ENCODE measurements at regions of chr4 and their contacts with region 1.

Region 1: GRCh38 chr4:153573881-153574802 is 108.0 kb downstream of the TMEM131L start:
- DNase-seq: no peak
- ATAC-seq: peak; percentile 60
- H3K4me3 ChIP-seq: no peak overlapping the region
- H3K27ac ChIP-seq: peak overlapping the region; percentile 48
- H3K4me1 ChIP-seq: peaks cover 50% of the 10 kb centered on the region
- H3K27me3 ChIP-seq: no peaks in the 10 kb centered on the region
- CTCF ChIP-seq: peak; percentile 41 to 65 (median 53)
- EP300 ChIP-seq: no peak
- POLR2A ChIP-seq: no peak
- RAD21 ChIP-seq: peak; percentile 81

Region 2: GRCh38 chr4:153426207-153426885 is 147.8 kb before region 1 on chr4:
- CTCF ChIA-PET with region 1: interaction called, 10 read pairs
- POLR2A ChIA-PET with region 1: no interaction called
- RAD21 ChIA-PET with region 1: interaction called, 7 read pairs
- SMC1A ChIA-PET with region 1: interaction called, 48 read pairs
- in situ Hi-C with region 1: no loop called
- intact Hi-C with region 1: no loop called
- DNase-seq: no peak
- ATAC-seq: peak; percentile 58
- H3K4me3 ChIP-seq: no peak overlapping the region
- H3K27ac ChIP-seq: 0 out of 2 replicates have a peak overlapping the region, but pooled peaks have one; percentile 4
- H3K4me1 ChIP-seq: peaks cover 20% of the 10 kb centered on the region
- H3K27me3 ChIP-seq: no peaks in the 10 kb centered on the region
- CTCF ChIP-seq: no peak
- EP300 ChIP-seq: no peak
- POLR2A ChIP-seq: no peak
- RAD21 ChIP-seq: no peak

Region 3: GRCh38 chr4:153438916-153439756 is 135.0 kb before region 1 on chr4:
- CTCF ChIA-PET with region 1: interaction called, 33 read pairs
- POLR2A ChIA-PET with region 1: interaction called, 4 read pairs
- RAD21 ChIA-PET with region 1: interaction called, 35 read pairs
- SMC1A ChIA-PET with region 1: interaction called, 48 read pairs
- in situ Hi-C with region 1: loop called (anchors 5 kb)
- intact Hi-C with region 1: no loop called
- DNase-seq: peak; percentile 79
- ATAC-seq: peak; percentile 76
- H3K4me3 ChIP-seq: peak overlapping the region; percentile 65
- H3K27ac ChIP-seq: peak overlapping the region; percentile 80
- H3K4me1 ChIP-seq: peaks cover 38% of the 10 kb centered on the region
- H3K27me3 ChIP-seq: no peaks in the 10 kb centered on the region
- CTCF ChIP-seq: 0 out of 6 replicates have a peak, but pooled peaks of 1 of the 3 experiments have one; percentile 4
- EP300 ChIP-seq: no peak
- POLR2A ChIP-seq: no peak
- RAD21 ChIP-seq: no peak

Region 4: GRCh38 chr4:153521999-153522801 is 51.9 kb before region 1 on chr4:
- CTCF ChIA-PET with region 1: interaction called, 9 read pairs
- POLR2A ChIA-PET with region 1: interaction called, 8 read pairs
- RAD21 ChIA-PET with region 1: interaction called, 9 read pairs
- SMC1A ChIA-PET with region 1: interaction called, 26 read pairs
- in situ Hi-C with region 1: no loop called
- intact Hi-C with region 1: loop called (anchors 2 kb)
- DNase-seq: peak; percentile 71
- ATAC-seq: peak; percentile 54
- H3K4me3 ChIP-seq: peak overlapping the region; percentile 59
- H3K27ac ChIP-seq: peak overlapping the region; percentile 96
- H3K4me1 ChIP-seq: peaks cover 85% of the 10 kb centered on the region
- H3K27me3 ChIP-seq: no peaks in the 10 kb centered on the region
- CTCF ChIP-seq: no peak
- EP300 ChIP-seq: no peak; a peak in 1 of 4 replicates
- POLR2A ChIP-seq: peak; percentile 56; the same call in 1 of the 2 replicates
- RAD21 ChIP-seq: no peak

Region 5: GRCh38 chr4:153585026-153585425 is 10.9 kb after region 1 on chr4:
- CTCF ChIA-PET with region 1: interaction called, 6 read pairs
- POLR2A ChIA-PET with region 1: interaction called, 8 read pairs
- RAD21 ChIA-PET with region 1: interaction called, 6 read pairs
- SMC1A ChIA-PET with region 1: interaction called, 10 read pairs
- in situ Hi-C with region 1: no loop called
- intact Hi-C with region 1: no loop called
- DNase-seq: no peak
- ATAC-seq: no peak
- H3K4me3 ChIP-seq: no peak overlapping the region
- H3K27ac ChIP-seq: no peak overlapping the region
- H3K4me1 ChIP-seq: peaks cover 7% of the 10 kb centered on the region; the same call in 1 of the 2 replicates
- H3K27me3 ChIP-seq: no peaks in the 10 kb centered on the region
- CTCF ChIP-seq: no peak
- EP300 ChIP-seq: no peak
- POLR2A ChIP-seq: no peak
- RAD21 ChIP-seq: no peak